Heart left ventricle (tissue), 16 donors: ENCODE measurements at regions of chr5 and their contacts with region 1.

Region 1: GRCh38 chr5:173887610-173888472 is at the start of gene CPEB4:
- DNase-seq: peak; percentile 99 to 100 (median 99)
- ATAC-seq: peak; percentile 95 to 97 (median 96)
- H3K4me3 ChIP-seq: peak within 1 kb of the TSS; percentile 45 to 96 (median 78)
- H3K27ac ChIP-seq: peak within 1 kb of the TSS; percentile 80 to 98 (median 92)
- H3K4me1 ChIP-seq: peaks cover 0 to 76% (median 19%) of the 10 kb centered on the region in 12 donors
- H3K27me3 ChIP-seq: no peaks in the 10 kb centered on the region
- CTCF ChIP-seq: peak in 1 of 12 donors; percentile 6
- POLR2A ChIP-seq: peak; percentile 93 to 99
- total RNA-seq, gene CPEB4: 104 to 217 (median 172) TPM

Region 2: GRCh38 chr5:173615884-173616576 is 271.8 kb before region 1 on chr5:
- intact Hi-C with region 1: loop called in 8 of 10 experiments (anchors 2 to 10 kb)
- DNase-seq: peak; percentile 52 to 70 (median 57)
- ATAC-seq: peak in 3 of 4 donors; percentile 43 to 70 (median 64)
- H3K4me3 ChIP-seq: peak overlapping the region; percentile 67 to 98 (median 90)
- H3K27ac ChIP-seq: peak overlapping the region; percentile 85 to 95 (median 91)
- H3K4me1 ChIP-seq: peaks cover 0 to 56% (median 36%) of the 10 kb centered on the region in 12 donors
- H3K27me3 ChIP-seq: no peaks in the 10 kb centered on the region
- CTCF ChIP-seq: peak; percentile 25 to 79 (median 58)
- POLR2A ChIP-seq: no peak

Region 3: GRCh38 chr5:173679909-173680630 is 207.8 kb before region 1 on chr5:
- intact Hi-C with region 1: loop called in 1 of 10 experiments (anchors 10 kb)
- DNase-seq: no peak
- ATAC-seq: peak in 3 of 4 donors; percentile 54 to 63 (median 56)
- H3K4me3 ChIP-seq: no peak overlapping the region
- H3K27ac ChIP-seq: no peak overlapping the region
- H3K4me1 ChIP-seq: no peaks in the 10 kb centered on the region
- H3K27me3 ChIP-seq: no peaks in the 10 kb centered on the region
- CTCF ChIP-seq: no peak
- POLR2A ChIP-seq: no peak

Region 4: GRCh38 chr5:173781814-173782670 is 105.8 kb before region 1 on chr5:
- intact Hi-C with region 1: loop called in 1 of 10 experiments (anchors 10 kb)
- DNase-seq: peak in 4 of 5 donors; percentile 70 to 90 (median 80)
- ATAC-seq: peak in 3 of 4 donors; percentile 85 to 89 (median 88)
- H3K4me3 ChIP-seq: no peak overlapping the region
- H3K27ac ChIP-seq: peak overlapping the region in 11 of 12 donors; percentile 3 to 79 (median 53)
- H3K4me1 ChIP-seq: peaks cover 0 to 58% (median 9%) of the 10 kb centered on the region in 12 donors
- H3K27me3 ChIP-seq: no peaks in the 10 kb centered on the region
- CTCF ChIP-seq: no peak
- POLR2A ChIP-seq: no peak

Region 5: DNA sequence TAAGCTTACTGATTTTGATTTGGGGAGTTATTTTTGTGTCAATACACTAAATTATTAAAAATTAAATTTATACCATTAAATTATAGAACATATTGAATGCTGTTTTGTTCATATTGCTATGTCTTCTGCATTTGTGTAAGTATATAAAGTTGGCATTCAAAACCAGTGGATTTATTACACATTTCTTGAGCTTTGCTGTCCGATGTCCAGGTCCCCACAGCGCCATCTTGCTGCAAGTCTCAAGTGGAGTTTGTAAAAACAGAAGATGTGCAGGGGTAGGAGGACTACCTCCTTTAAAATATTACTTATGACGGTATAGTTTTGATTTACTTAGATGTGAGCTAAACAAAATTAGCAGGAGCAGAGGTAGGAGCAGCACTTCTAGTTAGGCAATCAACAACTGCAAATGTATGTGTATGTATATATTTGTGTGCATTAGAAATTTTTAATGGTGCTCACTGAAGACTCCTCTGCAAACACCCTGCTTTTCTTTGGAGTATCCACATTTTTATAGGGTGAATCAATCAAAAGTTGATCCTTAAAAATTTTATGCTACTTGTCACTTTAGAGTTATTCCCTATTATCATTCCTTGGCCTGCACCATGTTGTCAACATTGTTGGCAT is 37.7 kb after region 1 on chr5:
- intact Hi-C with region 1: loop called in 6 of 10 experiments (anchors 2 to 5 kb)
- DNase-seq: peak in 4 of 5 donors; percentile 42 to 62 (median 52)
- ATAC-seq: peak in 1 of 4 donors; percentile 14
- H3K4me3 ChIP-seq: peak overlapping the region in 2 of 12 donors; percentile 3 to 10
- H3K27ac ChIP-seq: peak overlapping the region; percentile 58 to 89 (median 86)
- H3K4me1 ChIP-seq: peaks cover 15 to 97% (median 67%) of the 10 kb centered on the region in 12 donors
- H3K27me3 ChIP-seq: no peaks in the 10 kb centered on the region
- CTCF ChIP-seq: peak; percentile 21 to 70 (median 46)
- POLR2A ChIP-seq: no peak

Region 6: GRCh38 chr5:173954671-173955521 is 67.1 kb after region 1 on chr5:
- intact Hi-C with region 1: loop called in 2 of 10 experiments (anchors 10 kb)
- DNase-seq: peak in 2 of 5 donors; percentile 28 to 52
- ATAC-seq: peak; percentile 76 to 91 (median 88)
- H3K4me3 ChIP-seq: no peak overlapping the region
- H3K27ac ChIP-seq: peak overlapping the region; percentile 36 to 91 (median 78)
- H3K4me1 ChIP-seq: peaks cover 0 to 64% (median 21%) of the 10 kb centered on the region in 12 donors
- H3K27me3 ChIP-seq: no peaks in the 10 kb centered on the region
- CTCF ChIP-seq: no peak
- POLR2A ChIP-seq: peak in 1 of 2 donors; percentile 26